Psoas muscle (tissue), 8 donors: ENCODE measurements at regions of chr12 and their contacts with region 1.

Region 1: GRCh38 chr12:85866986-85867776 is 6.9 kb upstream of the NTS start:
- DNase-seq: no peak
- ATAC-seq: peak; percentile 42 to 79 (median 70)
- H3K4me3 ChIP-seq: no peak overlapping the region
- H3K27ac ChIP-seq: no peak overlapping the region
- H3K4me1 ChIP-seq: no peaks in the 10 kb centered on the region
- H3K27me3 ChIP-seq: no peaks in the 10 kb centered on the region
- CTCF ChIP-seq: peak; percentile 60

Region 2: GRCh38 chr12:85476756-85477155 is 390.4 kb before region 1 on chr12:
- intact Hi-C with region 1: loop called in 1 of 2 experiments (anchors 5 kb)
- DNase-seq: no peak
- ATAC-seq: no peak
- H3K4me3 ChIP-seq: no peak overlapping the region
- H3K27ac ChIP-seq: no peak overlapping the region
- H3K4me1 ChIP-seq: no peaks in the 10 kb centered on the region
- H3K27me3 ChIP-seq: no peaks in the 10 kb centered on the region
- CTCF ChIP-seq: no peak

Region 3: DNA sequence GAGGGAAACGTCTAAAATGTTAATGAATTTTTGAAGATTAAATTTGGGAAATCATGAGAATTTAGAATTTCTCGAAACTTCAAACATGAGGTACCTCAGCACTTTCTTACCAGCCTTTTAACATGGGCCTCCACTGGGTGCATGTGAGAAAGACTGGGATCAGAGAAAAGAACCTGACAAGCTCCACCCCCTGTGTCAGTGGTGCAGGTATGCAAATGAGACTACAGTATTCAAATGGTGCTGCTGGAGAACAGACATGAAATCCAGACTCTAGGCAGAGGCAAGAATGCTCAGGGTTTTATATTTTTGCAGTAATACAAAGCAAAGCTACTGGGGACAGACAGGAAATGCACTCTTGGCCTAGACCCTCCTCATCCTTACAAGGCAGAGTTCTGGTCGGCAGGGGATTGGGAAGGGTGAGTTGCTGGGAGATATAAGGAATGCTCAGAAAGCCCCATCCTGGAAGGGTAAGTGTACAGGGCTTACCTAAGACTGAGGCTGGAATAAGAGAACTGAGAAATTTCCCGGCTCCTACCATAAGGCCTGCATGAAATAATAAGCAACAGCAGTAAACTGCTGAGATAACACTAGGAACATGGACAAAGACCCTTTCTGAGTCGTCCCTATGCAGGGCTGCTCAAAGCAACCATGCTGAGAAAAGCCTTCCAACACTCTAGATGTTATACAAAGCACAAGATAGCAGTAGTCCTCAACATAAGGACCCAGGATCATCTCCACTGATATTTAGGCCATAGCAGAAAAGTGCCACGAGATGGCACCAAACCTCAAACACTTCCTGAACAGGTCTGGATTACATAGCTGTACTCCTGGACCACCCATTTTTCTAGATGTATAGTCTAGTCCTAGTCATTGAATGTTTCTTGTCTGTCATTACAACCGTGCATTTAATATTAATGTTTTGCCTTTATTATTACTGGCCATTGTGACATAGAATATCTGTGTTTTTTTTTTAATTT is 291.8 kb before region 1 on chr12:
- intact Hi-C with region 1: loop called (anchors 1 to 5 kb)
- DNase-seq: peak in 1 of 2 donors; percentile 17
- ATAC-seq: peak in 3 of 4 donors; percentile 46 to 67 (median 51)
- H3K4me3 ChIP-seq: no peak overlapping the region
- H3K27ac ChIP-seq: no peak overlapping the region
- H3K4me1 ChIP-seq: no peaks in the 10 kb centered on the region
- H3K27me3 ChIP-seq: no peaks in the 10 kb centered on the region
- CTCF ChIP-seq: peak; percentile 54

Region 4: DNA sequence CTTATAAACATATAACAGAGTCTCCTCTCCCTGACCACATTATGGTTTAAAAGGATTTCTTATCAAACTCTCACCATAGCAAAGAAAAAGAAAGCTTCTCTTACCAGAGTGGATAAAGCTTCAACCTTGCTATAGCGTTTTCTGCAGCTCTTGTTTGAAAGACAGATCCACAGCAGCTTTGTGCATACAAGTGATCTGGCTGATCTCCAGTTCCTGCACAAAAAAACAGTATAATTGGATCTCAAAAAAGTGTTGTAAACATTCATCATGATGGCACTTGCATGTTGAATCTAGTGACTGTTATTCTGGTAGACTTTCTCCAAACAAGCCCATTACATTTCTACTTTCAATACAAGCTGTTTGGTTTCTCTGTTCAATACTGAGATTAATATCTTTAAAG is 567.9 kb after region 1 on chr12:
- intact Hi-C with region 1: no loop called
- DNase-seq: no peak
- ATAC-seq: no peak
- H3K4me3 ChIP-seq: no peak overlapping the region
- H3K27ac ChIP-seq: no peak overlapping the region
- H3K4me1 ChIP-seq: no peaks in the 10 kb centered on the region
- H3K27me3 ChIP-seq: no peaks in the 10 kb centered on the region
- CTCF ChIP-seq: no peak